Right lobe of liver (tissue), 6 donors: ENCODE measurements at regions of chr12 and their contacts with region 1.

Region 1: DNA sequence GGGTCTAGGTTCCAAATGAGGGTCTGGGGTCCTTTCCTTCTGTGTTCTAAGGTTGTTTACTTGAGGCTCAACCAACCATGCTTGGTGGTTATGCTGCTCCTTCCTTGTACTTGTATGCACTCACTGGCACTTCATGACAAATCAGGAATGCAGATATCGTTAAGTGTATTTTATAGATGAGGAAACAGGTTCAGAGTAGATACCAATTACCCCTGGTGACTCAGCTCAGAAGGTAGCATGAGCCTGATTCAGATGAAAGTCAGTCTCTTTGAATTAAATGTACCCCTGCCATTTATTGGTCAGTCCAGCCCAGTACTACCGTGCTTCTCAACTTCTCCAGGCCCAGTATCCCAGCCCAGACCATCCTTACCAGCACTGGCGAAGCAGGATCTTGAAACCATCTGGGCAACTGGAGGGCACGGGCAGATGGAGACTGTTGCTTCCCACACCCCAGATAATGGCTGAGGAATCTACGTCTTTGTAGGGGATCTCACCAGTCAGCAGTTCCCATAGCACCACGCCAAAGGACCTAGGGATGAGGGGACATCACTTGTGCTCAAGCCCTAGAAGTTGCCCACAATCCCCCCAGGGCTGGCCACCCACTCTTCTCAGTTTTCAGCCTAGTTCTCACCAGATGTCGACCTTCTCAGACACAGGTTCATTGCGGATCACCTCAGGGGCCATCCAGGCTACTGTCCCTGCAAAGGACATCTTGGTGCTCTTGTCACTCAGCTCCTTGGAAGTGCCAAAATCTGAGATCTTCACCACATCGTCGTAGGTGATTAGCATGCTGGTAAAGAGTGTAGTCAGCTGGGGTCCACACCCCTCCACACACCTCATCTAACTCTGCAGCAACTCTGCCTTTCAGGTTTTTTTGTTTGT is 14.3 kb downstream of the MAP3K12 start:
- DNase-seq: no peak
- ATAC-seq: no peak
- H3K4me3 ChIP-seq: no peak overlapping the region
- H3K27ac ChIP-seq: no peak overlapping the region
- H3K4me1 ChIP-seq: no peaks in the 10 kb centered on the region
- H3K27me3 ChIP-seq: no peaks in the 10 kb centered on the region
- CTCF ChIP-seq: no peak
- POLR2A ChIP-seq: no peak

Region 2: DNA sequence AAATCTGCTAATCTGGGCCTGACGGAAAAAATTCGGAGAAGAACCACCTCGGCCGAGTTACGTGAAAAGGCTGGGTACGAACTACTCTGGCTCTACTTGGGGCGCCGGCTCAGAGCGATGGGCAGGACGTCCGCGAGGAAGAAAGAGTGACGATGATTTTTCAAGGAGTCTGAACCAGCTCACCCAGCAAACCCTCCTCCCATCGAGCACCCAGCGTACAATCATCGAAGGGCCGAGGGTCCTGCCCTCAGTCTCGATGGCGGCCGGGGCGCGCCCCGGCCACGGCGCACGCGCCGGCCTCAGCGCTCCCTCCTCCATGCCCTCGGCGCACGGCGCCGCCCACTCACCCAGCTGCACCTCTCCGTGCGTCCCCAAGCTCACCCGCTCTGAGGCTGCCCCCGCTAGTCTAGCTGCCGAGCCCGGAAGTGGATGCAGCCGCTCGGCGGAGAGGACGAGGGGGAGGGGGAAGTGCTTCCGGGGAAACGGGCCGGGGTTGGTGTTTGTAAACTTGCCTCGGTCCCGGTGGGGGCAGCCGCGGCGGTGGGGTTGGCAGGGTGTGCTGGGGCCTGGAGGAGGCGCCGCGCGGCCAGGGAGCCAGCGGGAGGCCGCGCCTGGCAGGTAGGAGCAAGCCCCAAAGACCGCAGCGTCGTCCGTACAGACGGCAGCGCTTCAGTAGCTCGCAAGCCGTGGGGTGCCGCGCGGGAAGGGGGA is 304.6 kb before region 1 on chr12 and contains the starts of genes CSAD and ZNF740:
- intact Hi-C with region 1: no loop called
- DNase-seq: peak; percentile 99
- ATAC-seq: peak; percentile 95 to 98 (median 96)
- H3K4me3 ChIP-seq: peak within 1 kb of the TSS; percentile 71 to 80 (median 76)
- H3K27ac ChIP-seq: peak within 1 kb of the TSS; percentile 83 to 89 (median 87)
- H3K4me1 ChIP-seq: peaks cover 0 to 62% (median 29%) of the 10 kb centered on the region in 4 donors
- H3K27me3 ChIP-seq: no peaks in the 10 kb centered on the region
- CTCF ChIP-seq: no peak
- POLR2A ChIP-seq: peak; percentile 83
- total RNA-seq, gene CSAD: 20.6 to 54.2 (median 37.1) TPM
- total RNA-seq, gene ZNF740: 5.5 to 24.4 (median 19.2) TPM

Region 3: GRCh38 chr12:53451661-53452158 is 33.2 kb before region 1 on chr12 and contains the start of gene PCBP2:
- intact Hi-C with region 1: loop called in 1 of 2 experiments (anchors 5 kb)
- DNase-seq: peak; percentile 98 to 99 (median 99)
- ATAC-seq: peak; percentile 94 to 97 (median 94)
- H3K4me3 ChIP-seq: peak within 1 kb of the TSS; percentile 63 to 89 (median 76)
- H3K27ac ChIP-seq: peak within 1 kb of the TSS; percentile 81 to 92 (median 92)
- H3K4me1 ChIP-seq: peaks cover 0 to 15% (median 4%) of the 10 kb centered on the region in 4 donors
- H3K27me3 ChIP-seq: no peaks in the 10 kb centered on the region
- CTCF ChIP-seq: peak; percentile 85 to 93 (median 90)
- POLR2A ChIP-seq: peak; percentile 51
- total RNA-seq, gene PCBP2: 254 to 463 (median 347) TPM

Region 4: DNA sequence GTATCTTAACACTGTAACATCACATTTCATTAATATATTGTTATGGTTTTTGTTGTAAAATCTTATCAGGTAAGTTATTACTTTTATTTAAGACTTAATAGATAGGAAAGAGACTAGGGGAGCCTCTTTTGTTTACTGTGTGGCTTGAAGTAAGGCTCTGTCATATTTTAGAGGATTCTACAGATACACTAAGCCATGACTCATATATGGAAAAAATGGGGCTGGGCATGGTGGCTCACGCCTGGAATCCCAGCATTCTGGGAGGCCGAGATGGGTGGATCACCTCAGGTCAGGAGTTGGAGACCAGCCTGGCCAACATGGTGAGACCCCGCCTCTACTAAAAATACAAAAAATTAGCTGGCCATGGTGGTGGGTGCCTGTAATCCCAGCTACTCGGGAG is 46.0 kb after region 1 on chr12:
- intact Hi-C with region 1: no loop called
- DNase-seq: no peak
- ATAC-seq: no peak
- H3K4me3 ChIP-seq: no peak overlapping the region
- H3K27ac ChIP-seq: no peak overlapping the region
- H3K4me1 ChIP-seq: peaks cover 0 to 3% (median 0%) of the 10 kb centered on the region in 4 donors
- H3K27me3 ChIP-seq: no peaks in the 10 kb centered on the region
- CTCF ChIP-seq: no peak
- POLR2A ChIP-seq: no peak